Ascending aorta (tissue), 2 donors: ENCODE measurements at regions of chr1 and their contacts with region 1.

Region 1: GRCh38 chr1:162187687-162188276 is 118.3 kb downstream of the NOS1AP start:
- DNase-seq: no peak
- H3K4me3 ChIP-seq: no peak overlapping the region
- H3K27ac ChIP-seq: no peak overlapping the region
- H3K4me1 ChIP-seq: no peaks in the 10 kb centered on the region
- H3K27me3 ChIP-seq: no peaks in the 10 kb centered on the region
- CTCF ChIP-seq: no peak

Region 2: GRCh38 chr1:162151900-162152829 is 35.6 kb before region 1 on chr1:
- intact Hi-C with region 1: no loop called
- DNase-seq: no peak
- H3K4me3 ChIP-seq: no peak overlapping the region
- H3K27ac ChIP-seq: no peak overlapping the region
- H3K4me1 ChIP-seq: no peaks in the 10 kb centered on the region
- H3K27me3 ChIP-seq: no peaks in the 10 kb centered on the region
- CTCF ChIP-seq: no peak

Region 3: GRCh38 chr1:162235241-162235800 is 47.5 kb after region 1 on chr1:
- intact Hi-C with region 1: loop called (anchors 5 kb)
- DNase-seq: no peak
- H3K4me3 ChIP-seq: no peak overlapping the region
- H3K27ac ChIP-seq: no peak overlapping the region
- H3K4me1 ChIP-seq: peaks cover 0 to 5% of the 10 kb centered on the region in 2 donors
- H3K27me3 ChIP-seq: no peaks in the 10 kb centered on the region
- CTCF ChIP-seq: no peak